Activated T-helper 2 cell treated with anti-CD3 and anti-CD28 coated beads, Interferon-gamma antibody, Interleukin-2, Interleukin-4, amounts not matched to agents 10 μg/mL and 5 μg/mL and 100 μg/mL, durations not matched to agents 14 hours and 24 hours and 36 hours (primary cell): ENCODE measurements at regions of chr9 and their contacts with region 1.

Region 1: GRCh38 chr9:85741875-85742629 is at the start of gene AGTPBP1:
- DNase-seq: peak; percentile 93
- H3K4me3 Mint-ChIP-seq: peak within 1 kb of the TSS; percentile 97
- H3K27ac Mint-ChIP-seq: peak within 1 kb of the TSS; percentile 97
- H3K4me1 Mint-ChIP-seq: peaks cover 40% of the 10 kb centered on the region
- H3K27me3 Mint-ChIP-seq: peaks cover 11% of the 10 kb centered on the region
- total RNA-seq, gene AGTPBP1: 26.5 and 28.1 TPM in 2 replicates

Region 2: GRCh38 chr9:84296146-84296843 is 1445.8 kb before region 1 on chr9:
- intact Hi-C with region 1: loop called (anchors 5 kb)
- DNase-seq: peak; percentile 23
- H3K4me3 Mint-ChIP-seq: peak overlapping the region; percentile 44
- H3K27ac Mint-ChIP-seq: peak overlapping the region; percentile 98
- H3K4me1 Mint-ChIP-seq: peaks cover 48% of the 10 kb centered on the region
- H3K27me3 Mint-ChIP-seq: no peaks in the 10 kb centered on the region

Region 3: DNA sequence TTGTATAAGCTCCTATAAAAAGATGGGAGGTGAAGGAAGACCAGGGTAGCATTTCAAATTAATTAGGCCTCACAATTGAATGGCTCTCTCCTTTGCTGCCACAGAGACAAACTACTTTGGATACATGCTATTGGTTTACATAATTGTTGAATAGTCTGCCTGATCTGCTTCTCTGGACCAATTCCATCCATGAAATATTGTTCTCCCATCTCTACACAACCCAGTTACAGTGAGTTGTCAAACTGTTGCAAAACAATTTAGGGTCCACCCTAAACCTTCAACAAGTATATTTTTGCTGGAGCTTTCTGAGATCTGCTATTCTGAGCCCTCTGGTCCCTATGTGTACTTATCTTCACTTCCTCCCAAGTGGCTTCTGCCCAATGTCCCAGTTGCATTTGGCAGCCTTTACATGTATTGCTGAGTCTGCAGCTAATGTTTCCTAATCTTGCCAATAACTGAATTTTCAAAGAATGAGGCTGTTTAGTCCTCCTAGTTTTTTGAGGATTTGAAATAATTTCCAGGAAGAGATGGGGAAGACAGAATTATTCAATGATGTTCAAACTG is 39.2 kb before region 1 on chr9:
- intact Hi-C with region 1: loop called (anchors 1 kb)
- DNase-seq: no peak
- H3K4me3 Mint-ChIP-seq: no peak overlapping the region
- H3K27ac Mint-ChIP-seq: no peak overlapping the region
- H3K4me1 Mint-ChIP-seq: peaks cover 11% of the 10 kb centered on the region
- H3K27me3 Mint-ChIP-seq: no peaks in the 10 kb centered on the region

Region 4: GRCh38 chr9:85940832-85941621 is 199.0 kb after region 1 on chr9 and contains the start of gene NAA35:
- intact Hi-C with region 1: loop called (anchors 1 kb)
- DNase-seq: peak; percentile 99
- H3K4me3 Mint-ChIP-seq: no peak within 1 kb of the TSS
- H3K27ac Mint-ChIP-seq: peak within 1 kb of the TSS; percentile 93
- H3K4me1 Mint-ChIP-seq: peaks cover 7% of the 10 kb centered on the region
- H3K27me3 Mint-ChIP-seq: no peaks in the 10 kb centered on the region
- total RNA-seq, gene NAA35: 31.3 and 33.6 TPM in 2 replicates

Region 5: DNA sequence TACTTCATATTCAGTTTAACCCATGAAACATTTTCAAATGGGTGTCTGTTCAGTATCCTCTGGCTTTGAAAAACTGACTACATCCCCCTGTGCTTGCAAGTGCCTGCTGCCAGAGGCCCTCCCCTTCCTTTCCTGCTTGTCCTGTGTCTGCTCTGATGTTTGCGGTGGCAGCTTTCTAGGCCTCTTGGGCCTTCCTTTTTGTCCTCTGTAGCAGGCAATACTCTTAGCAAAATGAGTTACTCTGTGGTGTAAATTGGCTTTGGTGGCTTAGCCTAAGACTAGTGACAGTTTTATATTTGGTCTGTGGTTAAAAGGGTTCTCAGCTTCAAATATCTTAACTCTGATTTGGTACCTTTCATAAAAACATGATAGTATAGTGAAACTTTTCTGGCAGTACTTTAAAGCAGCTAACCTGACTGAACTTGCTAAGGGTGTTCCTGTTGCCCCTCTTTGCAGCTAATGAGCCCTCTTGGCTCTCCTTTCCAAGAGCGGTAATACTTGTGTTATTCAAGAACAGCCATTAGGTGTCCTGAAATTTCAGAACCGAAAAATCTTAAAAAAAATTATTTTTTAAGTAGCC is 280.7 kb after region 1 on chr9:
- intact Hi-C with region 1: no loop called
- DNase-seq: peak; percentile 19
- H3K4me3 Mint-ChIP-seq: no peak overlapping the region
- H3K27ac Mint-ChIP-seq: peak overlapping the region; percentile 78
- H3K4me1 Mint-ChIP-seq: peaks cover 17% of the 10 kb centered on the region
- H3K27me3 Mint-ChIP-seq: no peaks in the 10 kb centered on the region

Region 6: DNA sequence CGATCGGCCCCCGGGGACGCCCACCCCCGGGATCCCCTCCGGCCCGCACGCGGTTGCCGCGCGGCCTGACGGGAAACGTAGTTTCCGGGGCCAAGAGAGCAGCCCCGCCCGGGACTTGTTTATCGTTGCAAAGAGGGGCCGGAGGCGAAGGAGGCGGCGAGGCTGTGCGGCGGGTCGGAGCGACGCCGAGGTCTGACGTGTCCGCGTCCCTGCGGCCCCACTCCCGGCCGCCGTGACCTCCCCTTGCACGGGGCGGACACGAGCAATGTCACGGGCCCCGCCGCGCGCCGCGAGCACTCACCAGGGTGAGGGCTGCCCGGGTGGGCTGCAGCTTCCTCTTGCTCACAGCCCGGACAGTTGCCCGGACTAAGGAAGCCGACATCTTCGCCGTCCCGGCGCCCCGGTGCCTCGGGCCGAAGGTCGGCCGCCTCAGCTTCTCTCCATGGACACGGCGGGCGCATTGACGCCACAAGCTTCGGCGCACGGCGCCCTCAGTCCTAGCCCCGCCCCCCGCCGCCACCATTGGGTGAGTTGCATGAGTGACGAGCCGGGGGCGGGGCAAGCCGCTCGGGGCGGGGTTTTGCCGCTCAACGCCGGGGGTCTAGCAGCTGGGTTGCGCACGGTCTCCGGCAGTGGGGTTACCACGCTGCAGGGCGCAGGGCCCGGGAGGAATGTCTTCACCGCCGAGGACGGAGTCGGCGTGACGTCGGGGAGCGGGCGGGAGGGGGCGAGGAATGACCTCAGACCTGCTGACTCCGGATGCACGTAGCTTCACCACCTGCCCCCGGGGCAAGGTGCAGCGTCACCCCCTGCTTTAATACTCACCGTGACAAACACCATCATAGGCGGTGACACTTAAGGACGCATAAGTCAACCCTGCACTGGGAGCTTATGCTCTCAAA is 540.3 kb after region 1 on chr9 and contains the start of gene ISCA1:
- intact Hi-C with region 1: loop called (anchors 2 kb)
- DNase-seq: peak; percentile 92
- H3K4me3 Mint-ChIP-seq: peak within 1 kb of the TSS; percentile 95
- H3K27ac Mint-ChIP-seq: peak within 1 kb of the TSS; percentile 99
- H3K4me1 Mint-ChIP-seq: peaks cover 36% of the 10 kb centered on the region
- H3K27me3 Mint-ChIP-seq: no peaks in the 10 kb centered on the region
- total RNA-seq, gene ISCA1: 28.5 and 28.9 TPM in 2 replicates